Left cardiac atrium (tissue), 4 donors: ENCODE measurements at regions of chr4 and their contacts with region 1.

Region 1: GRCh38 chr4:112327965-112328733 is 31.0 kb downstream of the ALPK1 start:
- DNase-seq: no peak
- ATAC-seq: peak in 1 of 2 donors; percentile 71

Region 2: DNA sequence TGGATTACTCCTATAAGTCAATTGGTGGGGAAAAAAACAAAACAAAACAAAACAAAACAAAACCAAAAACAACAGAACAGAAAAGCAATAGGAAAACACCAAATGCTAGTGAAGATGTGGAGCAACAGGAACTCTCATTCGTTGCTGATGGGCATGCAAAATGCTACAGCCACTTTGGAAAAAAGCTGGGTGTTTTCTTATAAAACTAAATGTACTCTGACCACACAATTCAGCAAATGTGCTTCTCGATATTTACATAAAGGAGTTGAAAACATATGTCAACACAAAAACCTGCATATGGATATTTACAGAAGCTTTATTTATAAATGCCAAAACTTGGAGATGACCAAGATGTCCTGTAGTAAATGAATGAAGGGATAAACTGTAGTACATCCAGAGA is 886.5 kb before region 1 on chr4:
- intact Hi-C with region 1: no loop called
- DNase-seq: no peak
- ATAC-seq: no peak

Region 3: GRCh38 chr4:112523764-112524505 is 195.8 kb after region 1 on chr4:
- intact Hi-C with region 1: loop called (anchors 5 kb)
- DNase-seq: peak; percentile 48
- ATAC-seq: peak; percentile 89 to 91